ENCODE measurements at regions of chr21 and their contacts with region 1.

Region 1: DNA sequence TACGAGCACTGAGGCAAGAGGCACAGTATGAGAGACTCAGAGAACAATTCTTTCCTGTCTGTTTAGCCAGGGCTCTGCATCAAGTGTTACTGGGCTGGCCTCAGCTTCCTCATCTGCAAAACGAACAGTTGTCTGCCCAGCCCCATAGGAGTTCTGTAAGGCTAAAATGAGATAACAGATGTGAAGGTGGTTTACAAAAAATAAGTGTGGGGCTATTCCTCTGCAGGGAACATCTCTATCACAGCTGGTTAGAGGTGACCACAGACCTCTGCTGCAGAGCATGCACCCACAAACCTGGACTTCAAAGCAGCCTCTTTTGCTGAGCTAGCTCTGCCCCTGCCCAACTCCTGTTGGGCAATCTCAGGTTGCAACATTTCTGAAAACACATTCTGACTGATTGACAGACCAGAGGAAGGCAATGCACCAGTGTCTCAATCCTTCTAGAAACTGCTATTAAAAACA is 10.5 kb upstream of the OLIG1 start:
- DNase-seq: peak in 2 of 9 experiments; percentile 32 to 53
- ATAC-seq: no peak
- H3K4me3 ChIP-seq: no peak overlapping the region
- H3K4me3 Mint-ChIP-seq: no peak overlapping the region
- H3K27ac ChIP-seq: no peak overlapping the region
- H3K27ac Mint-ChIP-seq: no peak overlapping the region
- H3K4me1 ChIP-seq: peaks cover 4% of the 10 kb centered on the region
- H3K4me1 Mint-ChIP-seq: peaks cover 13% of the 10 kb centered on the region
- H3K27me3 ChIP-seq: no peaks in the 10 kb centered on the region
- H3K27me3 Mint-ChIP-seq: peaks cover 20% of the 10 kb centered on the region
- CTCF ChIP-seq: no peak

Region 2: DNA sequence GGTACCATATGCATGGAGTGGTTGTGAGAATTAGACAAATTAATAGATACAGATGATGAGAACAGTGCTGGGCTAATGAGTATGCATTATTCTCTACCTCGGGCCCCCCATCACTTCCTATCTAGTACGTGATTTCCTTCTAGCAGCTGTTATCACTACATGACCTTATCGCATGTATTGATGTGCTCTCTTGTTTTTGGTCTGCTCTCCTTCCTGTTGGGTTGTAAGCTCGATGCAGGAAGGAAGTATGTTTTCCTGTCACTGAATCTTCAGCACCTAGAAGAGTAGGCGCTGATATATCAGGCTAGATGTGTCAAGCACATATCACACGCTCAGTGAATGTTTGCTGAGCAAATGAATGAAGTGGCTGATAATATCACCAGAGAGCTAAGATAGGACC is 126.4 kb after region 1 on chr21:
- CTCF ChIA-PET with region 1: interaction called, 4 read pairs
- POLR2A ChIA-PET with region 1: no interaction called
- intact Hi-C with region 1: loop called in 1 of 2 experiments (anchors 10 kb)
- DNase-seq: peak in 6 of 9 experiments; percentile 18 to 73 (median 35)
- ATAC-seq: peak; percentile 88
- H3K4me3 ChIP-seq: peak overlapping the region in 1 of 2 experiments; percentile 1
- H3K4me3 Mint-ChIP-seq: peak overlapping the region; percentile 51
- H3K27ac ChIP-seq: peak overlapping the region in 1 of 2 experiments; percentile 68
- H3K27ac Mint-ChIP-seq: peak overlapping the region; percentile 85
- H3K4me1 ChIP-seq: peaks cover 22% of the 10 kb centered on the region
- H3K4me1 Mint-ChIP-seq: peaks cover 35% of the 10 kb centered on the region
- H3K27me3 ChIP-seq: no peaks in the 10 kb centered on the region
- H3K27me3 Mint-ChIP-seq: no peaks in the 10 kb centered on the region
- CTCF ChIP-seq: no peak

Measured in CD8-positive, alpha-beta T cell (primary cell).